Calu3 (cell line): ENCODE measurements at regions of chr6 and their contacts with region 1.

Region 1: DNA sequence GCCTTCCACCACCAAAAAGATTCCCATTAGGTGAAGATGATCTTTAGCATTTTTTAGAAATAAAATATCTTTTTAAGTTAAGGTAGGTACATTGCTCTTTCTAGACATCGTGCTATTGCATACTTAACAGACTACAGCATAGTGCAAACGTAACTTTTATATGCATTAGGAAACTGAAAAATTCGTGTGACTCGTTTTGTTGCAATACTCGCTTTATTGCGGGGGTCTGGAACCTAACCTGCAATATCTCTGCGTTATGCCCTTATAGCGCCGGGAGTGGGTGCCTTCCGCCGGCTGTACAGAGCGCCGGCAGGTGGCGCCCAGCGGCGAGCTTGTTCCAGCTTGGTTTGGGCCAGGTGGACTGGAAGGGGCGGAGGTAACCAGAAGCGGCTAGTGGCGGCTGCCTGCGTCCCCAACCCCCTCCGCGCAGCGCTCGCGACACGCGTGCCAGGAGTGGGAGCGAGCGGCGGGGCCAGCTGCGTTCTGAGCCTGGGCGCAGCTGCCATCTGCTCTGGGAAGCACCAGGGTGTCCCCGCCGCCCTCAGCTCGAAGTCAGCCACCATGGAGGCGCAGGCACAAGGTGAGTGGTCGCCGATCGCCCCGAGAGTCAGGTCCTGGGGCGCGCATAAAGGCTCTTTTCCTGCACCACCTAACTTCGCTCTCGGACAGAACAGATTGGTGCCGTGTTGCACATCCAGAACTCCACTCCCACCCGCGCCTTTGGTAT is at the start of gene TPD52L1:
- DNase-seq: peak; percentile 82
- H3K4me3 Mint-ChIP-seq: peak within 1 kb of the TSS; percentile 77
- H3K27ac Mint-ChIP-seq: peak within 1 kb of the TSS; percentile 36
- H3K4me1 Mint-ChIP-seq: no peaks in the 10 kb centered on the region
- H3K27me3 Mint-ChIP-seq: no peaks in the 10 kb centered on the region
- CTCF ChIP-seq: peak; percentile 70
- total RNA-seq, gene TPD52L1: 37.5 and 50.6 TPM in 2 replicates

Region 2: DNA sequence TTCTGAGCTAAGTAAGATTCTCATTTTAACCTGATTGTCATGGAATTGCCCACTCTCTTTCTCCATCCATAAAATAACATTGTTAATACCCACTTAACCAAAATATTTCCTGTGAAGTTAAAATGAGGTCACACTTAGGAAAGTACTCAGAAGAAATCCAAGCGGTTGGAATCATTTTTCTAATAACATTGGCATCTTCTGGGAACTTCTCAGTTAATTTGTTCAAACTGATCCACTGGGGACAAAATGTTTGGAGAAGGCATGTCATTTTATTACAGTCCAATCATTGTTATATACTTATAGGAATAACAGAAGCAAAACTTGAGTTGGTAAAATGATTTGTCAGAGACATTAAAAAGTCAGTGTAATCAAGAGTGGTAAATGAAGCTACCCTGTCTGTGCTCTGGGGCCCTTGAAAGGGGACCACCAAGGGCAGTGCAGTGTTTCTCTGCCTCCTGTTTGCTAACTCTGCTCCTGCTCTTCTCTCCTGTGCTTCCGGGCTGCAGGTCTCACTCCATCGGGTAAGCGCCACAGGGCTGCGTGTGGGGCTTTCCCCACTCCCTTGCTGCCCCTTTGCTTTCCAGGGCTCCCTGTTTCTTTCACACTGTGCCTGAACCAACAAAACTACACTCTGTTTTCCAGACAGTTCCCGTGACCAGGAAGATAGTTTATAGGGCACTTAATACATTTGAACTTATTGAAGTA is 98.1 kb after region 1 on chr6:
- CTCF ChIA-PET with region 1: no interaction called
- intact Hi-C with region 1: no loop called
- DNase-seq: no peak
- H3K4me3 Mint-ChIP-seq: no peak overlapping the region
- H3K27ac Mint-ChIP-seq: no peak overlapping the region
- H3K4me1 Mint-ChIP-seq: peaks cover 10% of the 10 kb centered on the region
- H3K27me3 Mint-ChIP-seq: no peaks in the 10 kb centered on the region
- CTCF ChIP-seq: no peak

Region 3: DNA sequence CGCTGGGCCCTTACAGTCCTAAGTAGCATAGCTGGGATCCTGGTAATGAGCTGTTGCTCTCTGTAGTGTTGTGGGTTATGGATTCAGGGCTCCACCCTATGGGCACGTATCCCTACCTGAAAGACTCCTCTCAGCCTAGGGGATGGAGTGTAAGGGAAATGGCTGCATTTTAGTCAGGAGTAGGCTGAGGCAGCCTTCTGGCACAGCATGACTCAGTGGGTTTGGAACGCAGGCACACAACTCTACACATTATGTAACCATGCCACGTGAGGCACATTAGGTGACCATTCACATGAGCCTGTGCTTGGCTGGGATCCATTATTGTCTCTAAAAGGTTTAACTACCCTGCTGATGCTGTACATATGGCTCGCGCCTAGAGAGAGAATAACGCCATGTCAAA is 120.4 kb after region 1 on chr6:
- CTCF ChIA-PET with region 1: interaction called, 3 read pairs
- intact Hi-C with region 1: loop called (anchors 2 kb)
- DNase-seq: peak; percentile 81
- H3K4me3 Mint-ChIP-seq: no peak overlapping the region
- H3K27ac Mint-ChIP-seq: peak overlapping the region; percentile 74
- H3K4me1 Mint-ChIP-seq: peaks cover 9% of the 10 kb centered on the region
- H3K27me3 Mint-ChIP-seq: no peaks in the 10 kb centered on the region
- CTCF ChIP-seq: no peak